GM23248 (cell line): ENCODE measurements at regions of chr1 and their contacts with region 1.

Region 1: DNA sequence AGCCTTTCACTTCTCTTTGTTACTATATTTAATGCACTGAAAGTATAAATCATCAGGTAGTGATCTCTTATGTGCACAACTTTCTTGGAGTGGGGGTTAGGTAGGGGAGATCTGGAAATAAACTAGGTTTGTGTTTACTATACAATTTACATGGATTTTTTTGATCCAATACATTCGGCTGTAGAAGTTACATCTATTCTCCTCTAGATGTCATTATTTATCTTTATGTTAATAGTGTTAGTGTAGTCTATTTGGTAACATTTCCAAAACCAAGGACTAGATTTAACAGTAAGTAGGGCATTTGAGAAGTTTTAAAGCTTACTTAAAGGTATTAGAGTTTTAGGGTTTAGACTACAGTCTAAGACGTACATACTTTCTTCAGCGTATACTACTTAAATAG is 5.4 kb downstream of the VPS45 start:
- DNase-seq: peak; percentile 65
- H3K4me3 ChIP-seq: no peak overlapping the region
- H3K27ac ChIP-seq: no peak overlapping the region
- H3K4me1 ChIP-seq: peaks cover 9% of the 10 kb centered on the region
- H3K27me3 ChIP-seq: no peaks in the 10 kb centered on the region

Region 2: GRCh38 chr1:150176593-150176992 is 103.6 kb after region 1 on chr1:
- in situ Hi-C with region 1: loop called (anchors 5 kb)
- DNase-seq: no peak
- H3K4me3 ChIP-seq: no peak overlapping the region
- H3K27ac ChIP-seq: no peak overlapping the region
- H3K4me1 ChIP-seq: no peaks in the 10 kb centered on the region
- H3K27me3 ChIP-seq: no peaks in the 10 kb centered on the region